ENCODE measurements at regions of chr9 and their contacts with region 1.

Region 1: GRCh38 chr9:125241000-125241862 is at the start of gene HSPA5:
- DNase-seq: peak; percentile 97 to 100 (median 99)
- ATAC-seq: peak; percentile 91 to 94 (median 92)
- H3K4me3 ChIP-seq: peak within 1 kb of the TSS; percentile 83 to 99
- H3K4me3 Mint-ChIP-seq: peak within 1 kb of the TSS; percentile 92 to 100 (median 99)
- H3K27ac ChIP-seq: peak within 1 kb of the TSS; percentile 93
- H3K27ac Mint-ChIP-seq: peak within 1 kb of the TSS; percentile 98 to 99
- H3K4me1 ChIP-seq: peaks cover 21 to 29% of the 10 kb centered on the region in 2 experiments
- H3K4me1 Mint-ChIP-seq: peaks cover 44 to 52% (median 47%) of the 10 kb centered on the region in 3 donors
- H3K27me3 ChIP-seq: no peaks in the 10 kb centered on the region
- H3K27me3 Mint-ChIP-seq: no peaks in the 10 kb centered on the region
- total RNA-seq, gene HSPA5: 105 to 196 (median 118) TPM

Region 2: DNA sequence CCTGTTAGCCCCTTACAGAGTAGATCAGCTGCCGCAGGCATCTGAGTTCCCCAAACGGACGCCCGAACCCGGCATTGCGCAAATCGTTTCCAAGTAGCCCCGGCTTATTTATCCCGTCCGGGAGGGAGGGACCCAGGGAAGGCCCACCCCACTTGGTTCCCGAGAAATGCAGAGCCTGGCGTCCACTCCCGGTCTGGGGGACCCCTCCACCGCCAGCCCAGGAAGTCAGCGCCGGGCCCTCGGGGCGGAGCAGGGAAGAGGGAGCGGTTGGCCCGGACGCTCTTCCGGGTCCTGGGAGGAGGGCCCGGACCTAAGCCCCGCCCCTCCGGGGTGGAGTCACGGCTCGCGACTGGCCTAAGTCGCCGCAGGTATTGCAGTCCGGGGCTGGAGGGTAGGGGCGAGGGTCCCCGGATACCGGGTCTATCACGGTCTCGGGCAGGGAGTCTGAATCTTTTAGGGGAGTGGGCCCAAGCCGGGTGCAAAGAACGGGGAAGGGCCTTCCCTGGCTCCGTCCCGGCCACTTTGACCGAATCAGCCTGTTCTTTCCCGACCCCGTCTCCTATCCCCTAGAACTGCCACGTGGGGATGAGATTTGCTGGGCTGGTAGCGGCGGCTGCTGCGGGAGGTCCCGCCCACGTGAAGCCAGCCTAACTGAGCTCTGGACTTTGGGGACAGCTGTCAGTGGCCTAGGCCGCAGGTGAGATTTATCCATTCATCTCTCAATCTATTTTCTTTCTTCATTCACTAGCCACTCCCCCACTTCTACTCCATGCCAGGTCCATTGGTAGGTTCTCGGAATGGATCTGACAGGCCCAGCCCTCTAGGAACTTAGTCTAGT is 40.8 kb before region 1 on chr9 and contains the start of gene RABEPK:
- CTCF ChIA-PET with region 1: interaction called in 1 of 2 experiments, 3 read pairs
- POLR2A ChIA-PET with region 1: interaction called, 6 to 13 read pairs
- DNase-seq: peak; percentile 61 to 93 (median 81)
- ATAC-seq: peak; percentile 98 to 99 (median 98)
- H3K4me3 ChIP-seq: peak within 1 kb of the TSS; percentile 83 to 86
- H3K4me3 Mint-ChIP-seq: peak within 1 kb of the TSS; percentile 91 to 93 (median 91)
- H3K27ac ChIP-seq: peak within 1 kb of the TSS; percentile 78
- H3K27ac Mint-ChIP-seq: peak within 1 kb of the TSS; percentile 89 to 90
- H3K4me1 ChIP-seq: peaks cover 23 to 56% of the 10 kb centered on the region in 2 experiments
- H3K4me1 Mint-ChIP-seq: peaks cover 43 to 50% (median 46%) of the 10 kb centered on the region in 3 donors
- H3K27me3 ChIP-seq: no peaks in the 10 kb centered on the region
- H3K27me3 Mint-ChIP-seq: no peaks in the 10 kb centered on the region
- total RNA-seq, gene RABEPK: 12.0 to 16.3 (median 15.6) TPM

Region 3: DNA sequence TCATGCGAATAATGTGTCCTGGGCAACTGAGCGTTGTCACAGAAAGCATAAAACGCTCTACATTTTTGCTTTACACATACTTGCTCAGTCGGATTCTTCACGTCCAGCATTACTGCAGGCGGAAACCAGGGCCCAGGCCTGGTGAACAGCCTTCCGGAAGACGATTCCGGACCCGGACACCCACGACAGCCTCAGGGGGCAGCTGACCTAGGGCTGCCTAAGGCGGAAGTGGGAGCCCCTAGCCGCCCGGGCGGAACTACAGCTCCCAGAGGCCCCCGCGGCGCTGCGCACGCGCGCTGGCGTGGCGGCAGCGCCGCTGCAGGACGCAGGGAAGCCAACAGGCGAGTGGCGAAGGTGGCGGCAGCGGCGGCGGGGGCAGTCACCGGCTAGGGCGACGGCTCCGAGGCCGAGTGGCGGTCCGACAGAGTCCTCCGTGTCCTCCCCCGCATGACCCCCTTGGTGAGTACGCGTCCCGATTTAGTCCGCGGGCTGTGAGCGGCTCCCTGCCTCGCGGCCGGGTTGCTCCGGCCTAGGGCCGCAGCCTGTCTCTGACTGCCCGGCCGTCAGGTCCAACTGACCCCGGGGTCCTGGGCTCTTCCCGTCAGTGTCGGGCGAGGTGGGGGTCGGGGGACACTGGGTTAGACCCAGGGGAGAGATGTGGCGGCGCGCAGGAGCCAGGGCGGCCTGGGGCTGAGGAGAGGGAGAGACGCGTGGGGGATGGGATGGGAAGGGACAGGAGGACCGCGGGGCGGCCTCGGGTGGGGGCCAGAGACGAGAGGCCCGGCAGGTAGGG is 20.5 kb after region 1 on chr9 and contains the start of gene GAPVD1:
- CTCF ChIA-PET with region 1: interaction called, 3 to 5 read pairs
- POLR2A ChIA-PET with region 1: interaction called, 5 to 13 read pairs
- DNase-seq: peak; percentile 73 to 91 (median 84)
- ATAC-seq: peak; percentile 95 to 99 (median 99)
- H3K4me3 ChIP-seq: peak within 1 kb of the TSS; percentile 78 to 86
- H3K4me3 Mint-ChIP-seq: peak within 1 kb of the TSS; percentile 88 to 96 (median 96)
- H3K27ac ChIP-seq: peak within 1 kb of the TSS; percentile 75
- H3K27ac Mint-ChIP-seq: peak within 1 kb of the TSS; percentile 89 to 93
- H3K4me1 ChIP-seq: peaks cover 19 to 33% of the 10 kb centered on the region in 2 experiments
- H3K4me1 Mint-ChIP-seq: peaks cover 33 to 44% (median 41%) of the 10 kb centered on the region in 3 donors
- H3K27me3 ChIP-seq: no peaks in the 10 kb centered on the region
- H3K27me3 Mint-ChIP-seq: no peaks in the 10 kb centered on the region
- total RNA-seq, gene GAPVD1: 54.6 to 71.2 (median 57.4) TPM

Region 4: DNA sequence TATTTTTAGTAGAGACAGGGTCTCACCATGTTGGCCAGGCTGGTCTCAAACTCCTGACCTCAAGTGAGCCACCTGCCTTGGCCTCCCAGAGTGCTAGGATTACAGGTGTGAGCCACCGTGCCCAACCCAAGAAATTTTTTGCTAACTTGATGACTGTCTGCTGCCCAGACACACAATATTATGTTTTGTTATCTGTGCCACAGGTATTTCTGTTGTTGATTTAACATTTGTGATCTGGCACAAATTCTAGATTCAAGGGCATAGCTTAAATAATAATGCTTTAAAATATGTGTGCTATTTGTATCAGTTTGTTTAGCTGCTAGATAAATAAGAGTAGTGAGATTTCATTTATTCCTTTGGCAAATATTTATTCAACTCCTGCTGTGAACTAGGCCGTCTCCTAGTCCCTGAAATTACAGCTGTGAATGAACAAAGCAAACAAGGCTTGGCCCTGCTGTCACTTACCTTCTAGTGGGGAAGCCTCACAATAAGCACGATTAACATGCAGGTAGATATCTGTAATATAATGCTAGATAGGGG is 55.7 kb after region 1 on chr9:
- CTCF ChIA-PET with region 1: interaction called in 1 of 2 experiments, 3 read pairs
- POLR2A ChIA-PET with region 1: interaction called in 1 of 2 experiments, 11 read pairs
- DNase-seq: no peak
- ATAC-seq: no peak
- H3K4me3 ChIP-seq: no peak overlapping the region
- H3K4me3 Mint-ChIP-seq: no peak overlapping the region
- H3K27ac ChIP-seq: no peak overlapping the region
- H3K27ac Mint-ChIP-seq: peak overlapping the region in 1 of 2 donors; percentile 49
- H3K4me1 ChIP-seq: no peaks in the 10 kb centered on the region
- H3K4me1 Mint-ChIP-seq: peaks cover 11 to 20% (median 15%) of the 10 kb centered on the region in 3 donors
- H3K27me3 ChIP-seq: no peaks in the 10 kb centered on the region
- H3K27me3 Mint-ChIP-seq: no peaks in the 10 kb centered on the region

Measured in T-cell (primary cell).